Cardiac septum (tissue), 1 donor: ENCODE measurements at regions of chr2 and their contacts with region 1.

Region 1: GRCh38 chr2:120914839-120915521 is 179.3 kb downstream of the GLI2 start:
- DNase-seq: peak; percentile 91

Region 2: DNA sequence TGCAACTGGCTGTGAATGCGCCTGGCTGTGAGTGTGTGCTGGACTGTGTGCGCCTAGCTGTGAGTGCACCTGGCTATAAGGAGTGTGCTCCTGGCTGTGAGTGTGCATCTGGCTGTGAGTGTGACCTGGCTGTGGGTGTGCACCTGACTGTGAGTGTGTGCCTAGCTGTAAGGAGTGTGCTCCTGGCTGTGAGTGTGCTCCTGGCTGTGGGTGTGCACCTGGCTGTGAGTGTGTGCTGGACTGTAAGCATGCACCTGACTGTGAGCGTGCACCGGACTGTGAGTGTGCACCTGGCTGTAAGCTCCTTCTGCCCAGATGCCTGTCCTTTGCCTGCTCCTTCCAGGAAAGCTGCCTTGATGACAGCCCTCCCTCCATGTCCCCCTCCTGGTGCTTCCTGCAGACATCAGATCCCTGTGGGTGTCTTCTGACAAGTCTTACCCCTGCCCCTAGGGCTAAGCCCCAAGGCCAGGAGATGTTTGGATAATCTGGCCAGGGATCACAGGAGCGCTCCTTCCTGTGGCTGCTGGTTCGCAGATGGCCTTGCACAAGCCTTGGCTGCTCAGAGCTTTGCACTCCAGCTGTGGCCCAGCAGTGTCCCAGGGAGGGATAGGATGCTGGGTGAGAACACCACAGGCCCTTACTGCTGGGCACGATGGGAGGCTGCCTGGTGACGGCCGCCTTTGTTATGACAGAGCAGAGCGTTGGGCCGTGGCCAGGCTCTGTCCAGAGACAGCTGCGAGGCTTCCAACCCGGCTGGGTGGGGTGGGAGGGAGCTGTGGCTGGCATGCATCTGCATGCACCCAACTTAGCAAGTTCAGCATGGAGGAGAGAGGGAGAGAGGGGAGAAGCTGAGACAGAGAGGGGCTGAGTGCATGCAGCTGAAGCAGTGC is 89.4 kb before region 1 on chr2:
- intact Hi-C with region 1: loop called (anchors 5 kb)
- DNase-seq: no peak

Region 3: GRCh38 chr2:120934574-120935340 is 19.8 kb after region 1 on chr2:
- intact Hi-C with region 1: loop called (anchors 2 kb)
- DNase-seq: no peak

Region 4: DNA sequence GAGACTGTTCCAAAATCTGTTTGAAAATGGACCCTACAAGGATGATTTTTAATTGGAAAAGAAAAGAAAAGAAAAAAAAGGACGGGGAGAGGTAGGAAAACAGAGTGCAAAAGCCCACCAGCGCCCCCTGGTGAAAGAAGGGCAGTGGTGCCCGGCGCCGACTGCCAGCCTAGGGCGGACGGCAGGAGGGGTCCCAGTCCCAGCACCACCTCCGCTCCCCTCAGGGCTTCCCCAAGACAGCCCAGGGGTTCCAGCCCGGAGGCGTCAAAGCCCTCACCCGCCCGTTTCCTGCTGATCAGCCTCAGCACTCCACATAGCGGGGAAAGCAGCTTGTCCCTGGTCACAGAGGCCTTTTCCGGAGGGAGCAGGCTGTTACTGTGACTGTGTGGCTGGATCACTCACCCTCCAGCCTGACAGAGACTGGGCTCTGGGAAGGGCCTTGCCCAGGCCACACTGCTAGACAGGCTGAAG is 156.1 kb after region 1 on chr2:
- intact Hi-C with region 1: loop called (anchors 5 kb)
- DNase-seq: peak; percentile 84